ENCODE measurements at regions of chr13 and their contacts with region 1.

Region 1: DNA sequence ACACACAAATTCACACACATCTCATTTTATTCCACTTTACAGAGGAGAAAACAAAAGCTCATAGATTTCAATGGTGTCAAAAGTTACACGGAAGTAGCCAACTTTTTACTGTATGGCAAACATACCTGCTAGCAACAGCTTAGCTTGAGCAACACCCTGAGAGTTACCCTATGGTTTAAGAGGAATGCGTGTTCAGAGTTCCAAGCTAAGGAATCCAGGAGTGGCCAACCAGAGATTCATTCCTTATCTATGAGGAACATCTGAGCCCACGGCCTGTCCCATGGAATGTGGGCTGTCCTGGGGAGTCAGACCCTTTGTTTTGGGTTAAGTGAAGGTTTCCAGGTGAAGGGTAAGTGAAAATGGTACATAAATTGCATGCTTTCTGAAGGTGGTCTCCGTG is 67.6 kb downstream of the STARD13 start:
- DNase-seq: no peak
- H3K4me3 ChIP-seq: no peak overlapping the region
- H3K27ac ChIP-seq: no peak overlapping the region
- H3K27me3 ChIP-seq: no peaks in the 10 kb centered on the region
- CTCF ChIP-seq: no peak

Region 2: DNA sequence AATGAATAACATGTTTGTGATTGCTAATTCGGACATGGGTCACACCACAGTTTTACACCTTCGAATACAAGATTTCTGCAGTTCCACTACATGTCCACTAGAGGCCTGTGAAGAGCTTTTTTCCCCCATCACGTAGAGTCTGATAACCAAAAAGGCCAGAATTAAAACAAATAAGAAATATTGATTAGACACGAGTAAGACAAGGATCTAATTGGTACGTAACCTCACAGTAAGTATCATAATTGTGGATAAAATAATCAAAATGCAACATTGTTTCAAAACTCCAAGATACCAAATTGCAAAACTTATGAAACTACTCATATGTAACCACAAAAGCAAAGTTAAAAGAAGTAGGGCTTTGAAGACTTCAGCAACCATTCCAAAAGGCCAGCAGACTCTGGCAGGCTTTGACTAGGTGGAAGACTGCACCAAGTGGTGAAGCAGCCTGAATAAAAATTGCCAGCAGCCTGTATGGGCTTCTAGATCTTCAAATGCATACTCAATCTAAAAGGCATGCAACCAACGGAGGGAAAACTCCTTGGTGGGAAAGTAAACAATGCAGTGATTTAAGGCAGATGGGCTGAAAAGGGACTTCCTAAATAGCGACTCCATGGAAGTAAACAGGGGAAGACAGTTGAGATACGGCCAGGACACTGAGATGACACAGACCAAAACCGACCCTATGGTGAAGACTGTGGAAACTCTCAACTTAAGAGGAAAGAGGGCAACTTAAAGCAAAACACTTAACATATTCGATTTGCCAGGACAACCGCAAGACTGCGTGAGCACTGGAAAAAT is 10.8 kb after region 1 on chr13:
- CTCF ChIA-PET with region 1: interaction called, 11 read pairs
- POLR2A ChIA-PET with region 1: no interaction called
- DNase-seq: no peak
- H3K4me3 ChIP-seq: no peak overlapping the region
- H3K27ac ChIP-seq: peak overlapping the region; percentile 85
- H3K27me3 ChIP-seq: no peaks in the 10 kb centered on the region
- CTCF ChIP-seq: peak; percentile 98

Region 3: GRCh38 chr13:33577007-33577406 is 359.0 kb after region 1 on chr13:
- CTCF ChIA-PET with region 1: no interaction called
- POLR2A ChIA-PET with region 1: no interaction called
- DNase-seq: no peak
- H3K4me3 ChIP-seq: no peak overlapping the region
- H3K27ac ChIP-seq: no peak overlapping the region
- H3K27me3 ChIP-seq: no peaks in the 10 kb centered on the region
- CTCF ChIP-seq: no peak

Measured in AG04450 (cell line).